WTC11 (cell line): ENCODE measurements at regions of chr19 and their contacts with region 1.

Region 1: GRCh38 chr19:1551068-1552040 is 16.8 kb downstream of the MEX3D start:
- DNase-seq: no peak
- ATAC-seq: no peak
- H3K4me3 Mint-ChIP-seq: no peak overlapping the region
- H3K27ac Mint-ChIP-seq: no peak overlapping the region
- H3K4me1 Mint-ChIP-seq: no peaks in the 10 kb centered on the region
- H3K27me3 Mint-ChIP-seq: peaks cover 3% of the 10 kb centered on the region; the same call in 1 of the 2 replicates
- CTCF ChIP-seq: no peak

Region 2: DNA sequence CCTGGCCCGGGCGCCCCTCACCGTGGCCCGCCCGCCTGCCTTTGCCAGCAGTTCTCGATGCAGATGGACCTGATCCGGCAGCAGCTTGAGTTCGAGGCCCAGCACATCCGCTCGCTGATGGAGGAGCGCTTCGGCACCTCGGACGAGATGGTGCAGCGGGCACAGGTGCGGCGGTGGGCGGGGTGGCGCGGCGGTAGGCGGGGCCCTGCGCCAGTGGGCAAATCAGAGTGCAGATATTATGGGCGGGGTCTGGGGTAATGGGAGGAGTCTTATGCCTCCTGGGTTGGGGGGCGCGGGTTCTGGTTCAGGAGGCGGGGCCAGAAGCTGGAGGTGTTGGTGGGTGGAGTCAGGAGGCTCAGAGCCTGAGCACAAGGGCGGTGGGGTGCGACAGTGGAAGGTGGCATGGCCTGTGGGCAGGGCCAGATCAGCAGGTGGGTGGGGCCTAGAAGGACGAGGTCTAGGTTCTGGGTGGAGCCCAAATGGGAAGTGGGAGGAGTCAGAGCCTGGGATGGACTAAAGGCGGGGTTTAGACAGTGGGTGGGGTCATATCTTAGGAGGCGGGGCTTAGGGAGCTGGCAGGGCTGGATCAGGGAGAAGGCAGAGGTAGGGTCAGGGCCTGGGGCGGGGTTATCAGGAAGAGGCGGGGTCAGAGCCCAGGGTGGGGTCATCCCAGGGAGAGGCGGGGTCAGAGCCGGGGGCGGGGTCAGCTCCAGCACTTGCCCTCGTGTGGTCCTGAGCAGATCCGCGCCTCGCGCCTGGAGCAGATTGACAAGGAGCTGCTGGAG is 95.8 kb before region 1 on chr19:
- CTCF ChIA-PET with region 1: interaction called, 11 read pairs
- POLR2A ChIA-PET with region 1: no interaction called
- DNase-seq: peak; percentile 99
- ATAC-seq: peak; percentile 88
- H3K4me3 Mint-ChIP-seq: peak overlapping the region; percentile 47
- H3K27ac Mint-ChIP-seq: no peak overlapping the region
- H3K4me1 Mint-ChIP-seq: peaks cover 6% of the 10 kb centered on the region; the same call in 1 of the 2 replicates
- H3K27me3 Mint-ChIP-seq: peaks cover 55% of the 10 kb centered on the region
- CTCF ChIP-seq: no peak

Region 3: GRCh38 chr19:1534972-1535371 is 16.4 kb before region 1 on chr19:
- CTCF ChIA-PET with region 1: interaction called, 13 read pairs
- POLR2A ChIA-PET with region 1: interaction called, 5 read pairs
- DNase-seq: no peak
- ATAC-seq: no peak
- H3K4me3 Mint-ChIP-seq: no peak overlapping the region
- H3K27ac Mint-ChIP-seq: no peak overlapping the region
- H3K4me1 Mint-ChIP-seq: no peaks in the 10 kb centered on the region
- H3K27me3 Mint-ChIP-seq: no peaks in the 10 kb centered on the region
- CTCF ChIP-seq: no peak

Region 4: GRCh38 chr19:1577090-1577928 is 26.0 kb after region 1 on chr19:
- CTCF ChIA-PET with region 1: interaction called, 17 read pairs
- POLR2A ChIA-PET with region 1: no interaction called
- DNase-seq: no peak
- ATAC-seq: no peak
- H3K4me3 Mint-ChIP-seq: no peak overlapping the region
- H3K27ac Mint-ChIP-seq: no peak overlapping the region
- H3K4me1 Mint-ChIP-seq: no peaks in the 10 kb centered on the region
- H3K27me3 Mint-ChIP-seq: peaks cover under 1% of the 10 kb centered on the region; the same call in 1 of the 2 replicates
- CTCF ChIP-seq: no peak

Region 5: GRCh38 chr19:1592755-1593500 is 41.6 kb after region 1 on chr19 and contains the start of gene MBD3:
- CTCF ChIA-PET with region 1: interaction called, 21 read pairs
- POLR2A ChIA-PET with region 1: interaction called, 4 read pairs
- DNase-seq: peak; percentile 90
- ATAC-seq: peak; percentile 88
- H3K4me3 Mint-ChIP-seq: peak within 1 kb of the TSS; percentile 85
- H3K27ac Mint-ChIP-seq: peak within 1 kb of the TSS; percentile 93
- H3K4me1 Mint-ChIP-seq: peaks cover 10% of the 10 kb centered on the region
- H3K27me3 Mint-ChIP-seq: no peaks in the 10 kb centered on the region
- CTCF ChIP-seq: no peak
- total RNA-seq, gene MBD3: 90.2 to 94.8 TPM (median 93.2 TPM) in 3 replicates

Region 6: GRCh38 chr19:1619094-1619439 is 67.7 kb after region 1 on chr19:
- CTCF ChIA-PET with region 1: no interaction called
- POLR2A ChIA-PET with region 1: no interaction called
- DNase-seq: no peak
- ATAC-seq: no peak
- H3K4me3 Mint-ChIP-seq: no peak overlapping the region
- H3K27ac Mint-ChIP-seq: no peak overlapping the region
- H3K4me1 Mint-ChIP-seq: peaks cover 5% of the 10 kb centered on the region
- H3K27me3 Mint-ChIP-seq: no peaks in the 10 kb centered on the region
- CTCF ChIP-seq: no peak

Region 7: GRCh38 chr19:1632462-1633268 is 81.3 kb after region 1 on chr19:
- CTCF ChIA-PET with region 1: no interaction called
- POLR2A ChIA-PET with region 1: no interaction called
- DNase-seq: no peak
- ATAC-seq: no peak
- H3K4me3 Mint-ChIP-seq: no peak overlapping the region
- H3K27ac Mint-ChIP-seq: peak overlapping the region; percentile 65; the same call in 1 of the 2 replicates
- H3K4me1 Mint-ChIP-seq: no peaks in the 10 kb centered on the region
- H3K27me3 Mint-ChIP-seq: no peaks in the 10 kb centered on the region
- CTCF ChIP-seq: no peak

Region 8: DNA sequence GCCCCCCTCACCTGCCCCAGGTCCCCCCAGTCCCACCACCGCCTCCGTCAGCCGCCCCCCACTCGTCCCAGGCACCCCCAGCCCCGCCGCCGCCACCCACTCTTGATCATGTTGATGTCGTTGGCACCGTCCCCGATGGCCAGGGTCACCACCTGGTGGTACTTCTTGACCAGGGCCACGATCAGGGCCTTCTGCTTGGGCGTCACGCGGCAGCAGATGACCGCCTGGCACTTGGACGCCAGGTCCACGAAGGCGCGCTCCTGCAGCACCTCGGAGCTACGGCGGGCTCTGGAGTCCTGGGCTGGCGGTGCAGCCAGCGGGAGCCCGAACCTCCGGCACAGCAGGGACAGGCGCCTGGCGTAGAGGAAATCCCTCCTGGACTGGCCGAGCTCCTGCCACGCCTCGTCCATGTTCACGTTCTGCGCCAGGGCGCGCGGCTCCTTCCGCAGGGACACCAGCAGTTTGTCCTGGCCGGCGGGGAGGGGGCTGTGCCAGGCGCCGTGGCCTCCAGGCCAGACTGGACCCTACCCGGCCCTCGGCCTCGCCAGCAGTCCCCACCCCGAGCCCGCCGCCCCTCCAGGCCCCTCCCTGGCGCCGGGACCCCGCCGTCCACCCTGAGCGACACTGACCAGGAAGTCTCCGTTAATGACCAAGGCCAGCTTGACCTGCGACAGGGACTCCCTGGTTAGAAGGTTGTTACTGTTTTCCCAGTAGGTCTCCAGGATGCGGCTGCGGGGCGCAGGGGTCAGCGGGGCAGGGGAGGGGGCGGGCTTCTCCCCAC is 238.1 kb after region 1 on chr19:
- CTCF ChIA-PET with region 1: interaction called, 11 read pairs
- POLR2A ChIA-PET with region 1: no interaction called
- DNase-seq: no peak
- ATAC-seq: no peak
- H3K4me3 Mint-ChIP-seq: peak overlapping the region; percentile 48; the same call in 1 of the 2 replicates
- H3K27ac Mint-ChIP-seq: no peak overlapping the region
- H3K4me1 Mint-ChIP-seq: peaks cover 5% of the 10 kb centered on the region
- H3K27me3 Mint-ChIP-seq: peaks cover 29% of the 10 kb centered on the region
- CTCF ChIP-seq: no peak

Region 9: GRCh38 chr19:1896508-1896907 is 345.2 kb after region 1 on chr19:
- CTCF ChIA-PET with region 1: no interaction called
- POLR2A ChIA-PET with region 1: no interaction called
- DNase-seq: no peak
- ATAC-seq: no peak
- H3K4me3 Mint-ChIP-seq: no peak overlapping the region
- H3K27ac Mint-ChIP-seq: no peak overlapping the region
- H3K4me1 Mint-ChIP-seq: peaks cover 7% of the 10 kb centered on the region
- H3K27me3 Mint-ChIP-seq: peaks cover 17% of the 10 kb centered on the region
- CTCF ChIP-seq: no peak